SK-N-SH (cell line): ENCODE measurements at regions of chr18 and their contacts with region 1.

Region 1: DNA sequence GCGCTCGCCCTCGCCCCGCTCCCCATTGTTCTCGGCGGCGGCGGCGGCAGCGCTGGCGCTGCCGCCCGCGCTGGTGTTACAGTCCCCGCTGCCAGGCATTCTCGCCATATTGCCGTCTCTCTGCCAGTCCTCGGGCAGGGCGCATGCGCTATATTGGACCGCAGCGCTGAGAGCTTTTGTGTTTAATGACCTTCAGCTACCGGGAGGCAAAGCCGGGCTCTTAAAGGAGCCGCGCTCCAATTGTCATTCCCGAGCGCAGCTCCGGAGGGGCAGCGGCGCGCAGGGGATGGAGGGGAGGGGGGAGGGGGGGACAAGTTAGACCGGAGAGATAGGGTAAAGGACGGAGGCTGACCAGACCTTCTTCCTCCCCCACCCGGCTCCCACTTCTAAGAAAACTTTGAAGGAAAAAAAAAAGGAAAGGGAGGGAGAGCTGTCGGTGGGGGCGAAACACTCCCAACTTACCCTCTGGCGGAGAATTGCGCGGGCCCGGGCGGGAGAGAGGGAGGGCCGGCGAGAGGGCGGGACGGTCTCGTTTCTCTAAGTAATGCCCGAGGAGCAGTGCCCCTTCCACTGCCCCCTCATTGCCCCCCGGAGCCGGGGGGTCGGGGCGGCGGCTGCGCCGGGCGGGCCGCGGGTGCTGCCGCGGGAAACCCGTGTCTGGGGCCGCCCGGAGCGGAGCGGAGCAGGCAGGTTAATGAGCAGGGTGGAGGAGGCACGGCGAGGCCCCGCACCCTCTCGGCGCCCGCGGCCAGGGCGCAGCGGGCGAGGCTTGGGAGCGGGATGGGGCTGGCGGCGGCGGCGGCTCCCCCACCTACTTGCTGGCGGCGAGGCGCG is at the start of gene KCTD1:
- DNase-seq: peak; percentile 94
- H3K4me3 ChIP-seq: peak within 1 kb of the TSS; percentile 81 to 89
- H3K27ac ChIP-seq: peak within 1 kb of the TSS; percentile 64 to 85
- H3K4me1 ChIP-seq: peaks cover 9 to 34% of the 10 kb centered on the region in 2 experiments; a peak in 3 of 4 replicates
- H3K27me3 ChIP-seq: no peaks in the 10 kb centered on the region
- CTCF ChIP-seq: no peak
- EP300 ChIP-seq: no peak
- RAD21 ChIP-seq: no peak
- polyA plus RNA-seq, gene KCTD1: 6.4 and 12.8 TPM in 2 replicates

Region 2: DNA sequence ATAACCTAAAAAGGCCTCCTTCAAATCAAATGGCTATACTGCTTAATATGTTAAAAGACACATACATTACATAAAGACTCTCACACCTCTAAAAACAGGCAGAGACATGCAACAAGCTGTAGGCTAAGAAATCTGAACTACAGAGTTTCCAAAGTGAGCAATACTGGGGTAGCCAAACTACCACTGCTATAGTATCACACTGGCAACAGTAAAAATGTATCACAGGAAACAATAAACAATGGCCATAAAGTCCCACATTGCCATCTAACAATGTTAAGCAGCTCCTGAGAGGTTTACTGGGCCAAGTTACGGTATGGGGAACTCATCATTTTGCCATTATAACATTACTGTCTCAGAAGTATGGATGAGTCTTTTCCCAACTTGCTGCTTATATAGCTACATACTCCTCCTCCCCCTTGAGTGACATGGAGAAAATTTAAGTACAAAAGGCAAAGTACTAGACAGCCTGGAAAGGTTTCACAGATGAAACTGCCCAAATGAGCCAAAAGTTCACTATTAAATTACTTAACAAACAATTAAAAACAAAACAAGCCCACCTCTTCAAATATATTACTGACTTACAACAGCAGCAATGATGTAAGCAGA is 508.5 kb before region 1 on chr18:
- CTCF ChIA-PET with region 1: no interaction called
- POLR2A ChIA-PET with region 1: no interaction called
- DNase-seq: no peak
- H3K4me3 ChIP-seq: no peak overlapping the region
- H3K27ac ChIP-seq: no peak overlapping the region
- H3K4me1 ChIP-seq: no peaks in the 10 kb centered on the region; a peak in 1 of 4 replicates
- H3K27me3 ChIP-seq: no peaks in the 10 kb centered on the region
- CTCF ChIP-seq: no peak
- EP300 ChIP-seq: no peak
- RAD21 ChIP-seq: no peak

Region 3: DNA sequence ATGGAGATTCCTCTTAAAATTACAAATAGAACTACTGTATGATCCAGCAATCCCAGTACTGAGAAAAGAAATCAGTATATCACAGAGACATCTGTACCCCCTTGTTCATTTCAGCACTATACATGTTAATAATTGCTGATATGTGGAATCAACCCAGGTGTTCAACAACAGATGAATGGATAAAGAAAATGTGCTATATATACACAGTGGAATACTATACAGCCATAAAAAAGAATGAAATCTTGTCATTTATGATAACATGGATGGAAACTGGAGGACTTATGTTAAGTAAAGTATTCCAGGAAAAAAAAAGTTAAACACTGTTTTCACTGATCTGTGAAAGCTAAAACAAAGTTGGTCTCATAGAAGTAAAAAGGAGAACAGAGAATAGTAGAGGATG is 197.7 kb before region 1 on chr18:
- CTCF ChIA-PET with region 1: no interaction called
- POLR2A ChIA-PET with region 1: no interaction called
- DNase-seq: no peak
- H3K4me3 ChIP-seq: no peak overlapping the region
- H3K27ac ChIP-seq: no peak overlapping the region
- H3K4me1 ChIP-seq: no peaks in the 10 kb centered on the region
- H3K27me3 ChIP-seq: no peaks in the 10 kb centered on the region
- CTCF ChIP-seq: no peak
- EP300 ChIP-seq: no peak
- RAD21 ChIP-seq: no peak

Region 4: GRCh38 chr18:26405190-26405801 is 143.3 kb before region 1 on chr18:
- CTCF ChIA-PET with region 1: interaction called, 30 read pairs
- POLR2A ChIA-PET with region 1: interaction called, 4 read pairs
- DNase-seq: peak; percentile 62
- H3K4me3 ChIP-seq: no peak overlapping the region
- H3K27ac ChIP-seq: no peak overlapping the region
- H3K4me1 ChIP-seq: peaks cover 0 to 2% of the 10 kb centered on the region in 2 experiments; a peak in 1 of 4 replicates
- H3K27me3 ChIP-seq: no peaks in the 10 kb centered on the region
- CTCF ChIP-seq: peak; percentile 70
- EP300 ChIP-seq: no peak
- RAD21 ChIP-seq: peak; percentile 83

Region 5: GRCh38 chr18:26503382-26503781 is 45.3 kb before region 1 on chr18:
- CTCF ChIA-PET with region 1: interaction called, 6 read pairs
- POLR2A ChIA-PET with region 1: interaction called, 11 read pairs
- DNase-seq: peak; percentile 63
- H3K4me3 ChIP-seq: peak overlapping the region in 1 of 2 experiments; percentile 38; a peak in 2 of 4 replicates
- H3K27ac ChIP-seq: peak overlapping the region; percentile 3 to 90; a peak in 2 of 4 replicates
- H3K4me1 ChIP-seq: peaks cover 0 to 23% of the 10 kb centered on the region in 2 experiments; a peak in 2 of 4 replicates
- H3K27me3 ChIP-seq: no peaks in the 10 kb centered on the region
- CTCF ChIP-seq: no peak
- EP300 ChIP-seq: peak in 1 of 2 experiments; percentile 56; a peak in 1 of 4 replicates
- RAD21 ChIP-seq: peak; percentile 23; the same call in 1 of the 2 replicates

Region 6: DNA sequence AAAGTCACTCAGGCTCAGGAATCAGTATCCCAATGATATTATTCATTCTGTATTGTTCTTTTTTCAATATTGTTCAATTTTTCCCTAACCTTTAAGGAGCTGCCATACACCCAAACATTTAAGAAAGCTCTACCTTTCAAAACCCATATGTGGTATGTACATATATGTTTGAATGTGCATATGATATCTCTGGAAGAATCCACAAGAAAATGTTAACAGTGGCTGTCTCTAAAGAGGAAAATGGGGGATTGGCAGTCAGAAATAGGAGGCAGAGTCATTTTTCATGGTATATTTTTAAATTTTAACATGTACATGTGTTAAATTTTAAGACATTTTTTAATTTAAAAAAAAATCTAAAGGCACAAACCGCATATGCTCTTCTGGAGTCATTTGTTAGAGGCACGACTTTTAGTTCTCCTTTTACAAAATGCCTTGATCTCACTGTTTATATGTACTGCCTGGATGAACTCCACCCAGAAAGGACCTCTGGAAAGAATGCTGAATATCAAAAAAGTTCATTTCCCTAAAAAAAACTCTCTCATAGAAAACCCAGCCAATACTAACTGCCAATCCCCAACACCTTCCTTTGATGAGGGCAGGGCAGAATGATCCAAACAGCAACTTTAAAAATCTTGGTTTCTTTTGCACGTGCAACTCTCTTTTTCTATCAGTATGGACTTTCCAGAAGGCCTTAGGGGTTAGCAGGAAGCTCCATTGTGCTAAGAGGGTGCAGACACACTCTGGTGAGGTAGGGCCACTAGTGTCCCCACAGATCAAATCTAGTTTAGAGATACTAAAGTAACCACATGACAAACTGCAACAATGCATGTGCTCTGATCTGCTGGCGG is 23.9 kb before region 1 on chr18:
- CTCF ChIA-PET with region 1: interaction called, 15 read pairs
- POLR2A ChIA-PET with region 1: interaction called, 3 read pairs
- DNase-seq: no peak
- H3K4me3 ChIP-seq: no peak overlapping the region
- H3K27ac ChIP-seq: no peak overlapping the region
- H3K4me1 ChIP-seq: peaks cover 0 to 16% of the 10 kb centered on the region in 2 experiments; a peak in 1 of 4 replicates
- H3K27me3 ChIP-seq: no peaks in the 10 kb centered on the region
- CTCF ChIP-seq: no peak
- EP300 ChIP-seq: no peak
- RAD21 ChIP-seq: no peak

Region 7: DNA sequence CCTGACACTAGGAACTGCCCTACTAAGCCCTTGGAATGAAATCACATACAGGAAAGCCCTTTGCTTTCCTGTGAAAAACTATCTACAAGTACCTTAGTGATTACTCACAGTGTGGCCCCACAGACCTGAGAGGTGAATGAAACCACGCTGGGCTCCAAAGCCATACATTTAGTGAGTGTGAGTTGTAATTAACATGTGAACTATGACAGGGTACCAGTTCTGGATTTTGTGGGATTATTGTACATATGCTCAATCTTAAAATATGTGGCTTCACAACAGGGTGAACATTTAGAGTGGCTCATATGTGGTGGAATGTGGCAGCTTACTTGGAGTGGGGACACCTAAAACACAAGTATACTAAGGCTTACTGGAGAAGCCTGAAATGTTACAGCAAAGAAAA is 12.6 kb before region 1 on chr18:
- CTCF ChIA-PET with region 1: interaction called, 14 read pairs
- POLR2A ChIA-PET with region 1: interaction called, 3 read pairs
- DNase-seq: no peak
- H3K4me3 ChIP-seq: no peak overlapping the region
- H3K27ac ChIP-seq: 0 out of 4 replicates have a peak overlapping the region, but pooled peaks of 1 of the 2 experiments have one; percentile 23
- H3K4me1 ChIP-seq: peaks cover 7 to 13% of the 10 kb centered on the region in 2 experiments; a peak in 2 of 4 replicates
- H3K27me3 ChIP-seq: no peaks in the 10 kb centered on the region
- CTCF ChIP-seq: no peak
- EP300 ChIP-seq: no peak
- RAD21 ChIP-seq: no peak

Region 8: DNA sequence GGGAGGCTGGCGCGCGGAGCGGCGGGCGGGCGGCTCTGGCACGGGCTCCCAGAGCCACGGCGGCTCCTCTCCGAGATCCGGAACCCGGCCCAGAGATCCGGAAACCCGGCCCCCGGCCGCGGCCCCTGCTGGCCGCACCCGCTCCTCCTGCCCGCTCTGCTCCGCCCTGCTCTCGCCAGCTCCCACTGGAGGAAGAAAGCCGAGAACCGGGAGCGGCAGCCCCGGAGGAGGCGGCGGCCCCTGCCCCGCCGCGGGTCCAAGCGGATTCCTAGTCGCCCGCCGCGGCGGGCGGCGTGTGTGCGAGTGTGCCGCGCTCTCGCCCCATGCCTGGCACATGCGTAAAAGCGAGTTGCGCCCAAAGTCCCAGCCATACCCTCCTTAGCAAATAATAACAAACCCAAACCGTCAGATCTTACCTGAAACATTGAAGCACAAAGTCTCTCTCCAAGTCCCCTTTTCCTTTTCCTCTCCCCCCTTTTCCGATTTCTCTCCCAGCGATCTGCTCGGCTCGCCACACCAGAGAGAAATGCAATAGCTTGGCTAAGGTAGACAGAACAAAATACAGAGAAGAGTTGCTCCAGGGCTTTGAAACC is 108.4 kb after region 1 on chr18:
- CTCF ChIA-PET with region 1: interaction called, 11 read pairs
- POLR2A ChIA-PET with region 1: interaction called, 6 read pairs
- DNase-seq: peak; percentile 80
- H3K4me3 ChIP-seq: peak overlapping the region; percentile 75 to 93
- H3K27ac ChIP-seq: peak overlapping the region in 1 of 2 experiments; percentile 97; a peak in 2 of 4 replicates
- H3K4me1 ChIP-seq: peaks cover 0 to 14% of the 10 kb centered on the region in 2 experiments; a peak in 2 of 4 replicates
- H3K27me3 ChIP-seq: peaks cover 11% of the 10 kb centered on the region; the same call in 1 of the 2 replicates
- CTCF ChIP-seq: peak; percentile 26
- EP300 ChIP-seq: no peak
- RAD21 ChIP-seq: 0 out of 2 replicates have a peak, but pooled peaks have one; percentile 11

Region 9: DNA sequence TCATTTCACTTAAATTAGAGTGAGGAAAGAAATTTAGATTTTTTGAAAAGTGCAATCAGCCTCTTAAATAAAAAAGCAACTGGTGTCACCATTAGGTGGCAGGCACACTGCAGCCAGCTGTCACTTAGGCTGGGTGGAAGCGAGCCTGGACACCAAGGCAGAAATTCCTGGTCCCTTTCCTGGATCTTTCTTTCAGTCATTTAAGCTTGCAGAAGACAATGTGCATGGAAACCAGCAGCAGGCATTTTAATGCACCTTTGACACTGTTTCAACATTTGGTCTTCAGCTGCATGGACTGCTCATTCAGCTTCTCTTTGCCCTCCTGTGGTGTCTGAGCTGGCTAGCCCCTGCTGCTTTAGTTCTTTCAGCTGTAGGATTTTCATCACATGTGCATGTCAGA is 255.9 kb after region 1 on chr18:
- CTCF ChIA-PET with region 1: no interaction called
- POLR2A ChIA-PET with region 1: no interaction called
- DNase-seq: peak; percentile 40
- H3K4me3 ChIP-seq: no peak overlapping the region
- H3K27ac ChIP-seq: no peak overlapping the region
- H3K4me1 ChIP-seq: peaks cover 0 to 6% of the 10 kb centered on the region in 2 experiments; a peak in 2 of 4 replicates
- H3K27me3 ChIP-seq: no peaks in the 10 kb centered on the region
- CTCF ChIP-seq: no peak; the same call in 1 of the 2 replicates
- EP300 ChIP-seq: no peak
- RAD21 ChIP-seq: peak; percentile 66

Region 10: GRCh38 chr18:27652480-27653121 is 1104.0 kb after region 1 on chr18:
- CTCF ChIA-PET with region 1: no interaction called
- POLR2A ChIA-PET with region 1: no interaction called
- DNase-seq: no peak
- H3K4me3 ChIP-seq: no peak overlapping the region
- H3K27ac ChIP-seq: no peak overlapping the region
- H3K4me1 ChIP-seq: no peaks in the 10 kb centered on the region
- H3K27me3 ChIP-seq: peaks cover 5% of the 10 kb centered on the region; the same call in 1 of the 2 replicates
- CTCF ChIP-seq: no peak
- EP300 ChIP-seq: no peak
- RAD21 ChIP-seq: no peak